ENCODE measurements at regions of chr5 and their contacts with region 1.

Region 1: DNA sequence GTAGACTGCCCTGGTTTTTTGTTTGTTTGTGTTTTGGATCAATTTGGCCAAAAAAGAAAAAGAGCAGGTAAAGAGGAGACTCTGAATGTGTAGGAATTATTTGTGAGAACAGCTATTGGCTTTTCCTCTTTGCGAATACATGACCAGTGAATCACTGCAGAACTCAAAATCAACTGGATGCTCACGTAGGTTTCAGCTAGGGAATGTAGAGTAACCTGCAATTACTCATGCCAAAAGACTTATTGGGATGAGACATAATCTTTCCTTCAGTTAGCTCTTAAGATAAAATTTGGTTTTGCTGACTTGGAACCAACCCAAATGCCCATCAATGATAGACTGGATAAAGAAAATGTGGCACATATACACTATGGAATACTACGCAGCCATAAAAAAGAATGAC is 348.0 kb downstream of the NPR3 start:
- DNase-seq: no peak
- H3K4me3 Mint-ChIP-seq: no peak overlapping the region
- H3K27ac Mint-ChIP-seq: no peak overlapping the region
- H3K4me1 Mint-ChIP-seq: no peaks in the 10 kb centered on the region
- H3K27me3 Mint-ChIP-seq: no peaks in the 10 kb centered on the region

Region 2: DNA sequence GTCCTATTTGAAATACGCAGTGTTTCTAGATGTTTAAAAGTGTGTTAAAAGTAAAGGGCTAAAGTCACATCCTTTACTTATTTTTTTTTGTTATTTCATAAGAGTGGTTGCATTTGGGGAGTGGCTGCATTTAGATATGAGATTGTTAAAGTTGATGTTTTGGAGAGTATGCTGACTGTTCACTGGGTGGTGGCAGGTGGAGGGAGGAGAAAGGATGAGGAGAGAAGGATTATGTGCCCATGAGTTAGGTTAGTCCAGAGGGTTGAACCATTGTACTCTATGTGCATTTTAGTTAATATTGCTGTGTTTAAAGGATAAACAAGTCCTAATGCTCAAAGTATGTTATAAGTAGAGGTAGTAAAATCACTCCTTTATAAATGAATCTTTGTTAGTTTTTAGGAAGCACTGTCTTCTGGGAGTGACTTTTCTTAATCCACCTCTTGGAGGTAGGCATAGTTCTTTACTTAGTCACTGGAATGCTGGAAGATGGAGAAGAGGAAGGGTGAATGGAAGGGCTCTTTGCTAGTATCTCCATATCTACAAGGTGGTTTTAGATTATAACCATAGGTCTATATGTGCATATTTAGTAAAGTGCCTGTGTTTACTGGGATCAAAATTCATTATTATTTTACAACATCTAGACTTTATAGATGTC is 15.6 kb before region 1 on chr5:
- intact Hi-C with region 1: no loop called
- DNase-seq: no peak
- H3K4me3 Mint-ChIP-seq: no peak overlapping the region
- H3K27ac Mint-ChIP-seq: no peak overlapping the region
- H3K4me1 Mint-ChIP-seq: no peaks in the 10 kb centered on the region
- H3K27me3 Mint-ChIP-seq: no peaks in the 10 kb centered on the region

Region 3: GRCh38 chr5:33120671-33121070 is 61.6 kb after region 1 on chr5:
- intact Hi-C with region 1: loop called (anchors 2 kb)
- DNase-seq: no peak
- H3K4me3 Mint-ChIP-seq: no peak overlapping the region
- H3K27ac Mint-ChIP-seq: no peak overlapping the region
- H3K4me1 Mint-ChIP-seq: no peaks in the 10 kb centered on the region
- H3K27me3 Mint-ChIP-seq: no peaks in the 10 kb centered on the region

Region 4: GRCh38 chr5:33241802-33242201 is 182.7 kb after region 1 on chr5:
- intact Hi-C with region 1: no loop called
- DNase-seq: no peak
- H3K4me3 Mint-ChIP-seq: no peak overlapping the region
- H3K27ac Mint-ChIP-seq: no peak overlapping the region
- H3K4me1 Mint-ChIP-seq: peaks cover 16% of the 10 kb centered on the region
- H3K27me3 Mint-ChIP-seq: no peaks in the 10 kb centered on the region

Region 5: GRCh38 chr5:33530183-33531036 is 471.3 kb after region 1 on chr5:
- intact Hi-C with region 1: no loop called
- DNase-seq: no peak
- H3K4me3 Mint-ChIP-seq: no peak overlapping the region
- H3K27ac Mint-ChIP-seq: no peak overlapping the region
- H3K4me1 Mint-ChIP-seq: no peaks in the 10 kb centered on the region
- H3K27me3 Mint-ChIP-seq: no peaks in the 10 kb centered on the region

Measured in activated T-helper 2 cell treated with anti-CD3 and anti-CD28 coated beads, Interferon-gamma antibody, Interleukin-2, Interleukin-4, amounts not matched to agents 10 μg/mL and 5 μg/mL and 100 μg/mL, durations not matched to agents 14 hours and 24 hours and 36 hours (primary cell).